ENCODE measurements at regions of chr17 and their contacts with region 1.

Region 1: GRCh38 chr17:3602499-3602898 is 6.7 kb downstream of the TRPV1 start:
- DNase-seq: peak; percentile 43
- ATAC-seq: peak; percentile 83
- H3K4me3 ChIP-seq: no peak overlapping the region
- H3K27ac ChIP-seq: no peak overlapping the region
- H3K4me1 ChIP-seq: no peaks in the 10 kb centered on the region
- H3K27me3 ChIP-seq: no peaks in the 10 kb centered on the region
- CTCF ChIP-seq: peak; percentile 37 to 69 (median 67); a peak in 5 of 6 replicates
- POLR2A ChIP-seq: no peak
- RAD21 ChIP-seq: peak; percentile 51

Region 2: DNA sequence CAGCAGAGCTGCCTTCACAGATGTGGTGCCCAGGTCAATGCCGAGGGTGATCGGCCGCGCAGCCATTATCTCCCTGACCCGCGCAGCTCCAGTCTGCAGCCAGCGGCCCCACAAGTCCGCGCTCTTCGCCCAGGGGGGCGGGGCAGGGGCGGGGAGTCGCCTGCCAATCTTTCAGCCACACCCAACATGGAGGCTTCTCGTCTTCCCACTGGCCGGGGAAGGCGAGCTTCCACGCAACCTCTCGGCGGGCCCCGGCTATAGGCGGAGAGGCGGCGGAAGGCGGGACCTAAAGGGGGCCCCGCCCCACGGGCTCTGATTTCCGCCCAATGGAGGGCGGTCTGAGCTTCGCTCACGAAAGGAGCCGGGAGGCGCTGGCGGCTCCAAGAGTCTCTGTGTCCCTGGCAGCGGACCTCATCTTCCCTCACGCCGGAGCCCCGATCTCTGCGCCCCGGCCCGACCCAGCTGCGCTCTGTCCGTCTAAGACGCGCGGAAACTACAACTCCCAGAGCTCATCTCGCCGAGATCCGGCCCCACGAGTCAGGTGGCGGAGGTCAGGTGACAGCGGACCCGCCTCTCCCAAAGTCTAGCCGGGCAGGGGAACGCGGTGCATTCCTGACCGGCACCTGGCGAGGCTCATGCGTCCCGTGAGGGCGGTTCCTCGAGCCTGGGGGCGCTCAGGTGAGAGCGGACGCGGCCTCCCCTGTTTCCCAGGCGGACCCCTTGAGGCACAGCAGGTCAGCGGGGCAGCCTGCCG is 33.8 kb after region 1 on chr17 and contains the starts of genes CTNS and SHPK:
- CTCF ChIA-PET with region 1: interaction called, 10 read pairs
- POLR2A ChIA-PET with region 1: no interaction called
- RAD21 ChIA-PET with region 1: no interaction called
- intact Hi-C with region 1: no loop called
- DNase-seq: peak; percentile 90
- ATAC-seq: peak; percentile 95
- H3K4me3 ChIP-seq: peak within 1 kb of the TSS; percentile 94
- H3K27ac ChIP-seq: peak within 1 kb of the TSS; percentile 94
- H3K4me1 ChIP-seq: peaks cover 6 to 15% of the 10 kb centered on the region in 2 experiments; a peak in 3 of 4 replicates
- H3K27me3 ChIP-seq: no peaks in the 10 kb centered on the region
- CTCF ChIP-seq: no peak
- POLR2A ChIP-seq: peak; percentile 59
- RAD21 ChIP-seq: no peak
- total RNA-seq, gene CTNS: 7.9 TPM
- total RNA-seq, gene SHPK: 19.6 TPM

Region 3: GRCh38 chr17:3683054-3683511 is 80.6 kb after region 1 on chr17:
- CTCF ChIA-PET with region 1: no interaction called
- POLR2A ChIA-PET with region 1: no interaction called
- RAD21 ChIA-PET with region 1: no interaction called
- intact Hi-C with region 1: no loop called
- DNase-seq: peak; percentile 53
- ATAC-seq: peak; percentile 90
- H3K4me3 ChIP-seq: no peak overlapping the region
- H3K27ac ChIP-seq: no peak overlapping the region
- H3K4me1 ChIP-seq: peaks cover 0 to 10% of the 10 kb centered on the region in 2 experiments; a peak in 3 of 4 replicates
- H3K27me3 ChIP-seq: no peaks in the 10 kb centered on the region
- CTCF ChIP-seq: peak; percentile 93 to 98 (median 97)
- POLR2A ChIP-seq: no peak
- RAD21 ChIP-seq: peak; percentile 68